Right lobe of liver (tissue), 6 donors: ENCODE measurements at regions of chr2 and their contacts with region 1.

Region 1: DNA sequence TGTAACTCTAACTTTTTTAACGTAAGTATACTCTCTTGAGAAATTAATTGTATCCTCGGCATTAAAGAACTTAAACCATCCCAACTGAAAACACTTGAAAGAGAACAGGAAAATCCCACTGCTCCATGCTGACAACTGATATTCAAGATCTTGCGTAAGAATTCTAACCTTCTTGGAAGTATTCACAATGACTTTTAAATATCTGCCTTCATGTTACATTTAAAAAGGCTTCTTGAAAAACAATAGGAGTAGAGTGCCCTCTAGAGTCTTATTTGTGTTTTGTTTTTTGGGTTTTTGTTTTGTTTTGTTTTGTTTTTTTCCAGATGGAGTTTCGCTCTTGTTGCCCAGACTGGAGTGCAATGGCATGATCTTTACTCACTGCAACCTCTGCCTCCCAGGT is 65.4 kb upstream of the DNAJC10 start:
- DNase-seq: no peak
- ATAC-seq: peak; percentile 30 to 53 (median 39)
- H3K4me3 ChIP-seq: no peak overlapping the region
- H3K27ac ChIP-seq: no peak overlapping the region
- H3K4me1 ChIP-seq: no peaks in the 10 kb centered on the region
- H3K27me3 ChIP-seq: no peaks in the 10 kb centered on the region
- CTCF ChIP-seq: peak; percentile 34 to 46 (median 44)
- POLR2A ChIP-seq: no peak

Region 2: GRCh38 chr2:182186132-182186735 is 464.5 kb before region 1 on chr2:
- intact Hi-C with region 1: loop called in 1 of 2 experiments (anchors 10 kb)
- DNase-seq: no peak
- ATAC-seq: peak; percentile 49 to 73 (median 65)
- H3K4me3 ChIP-seq: no peak overlapping the region
- H3K27ac ChIP-seq: no peak overlapping the region
- H3K4me1 ChIP-seq: no peaks in the 10 kb centered on the region
- H3K27me3 ChIP-seq: no peaks in the 10 kb centered on the region
- CTCF ChIP-seq: peak; percentile 75 to 84 (median 80)
- POLR2A ChIP-seq: no peak

Region 3: DNA sequence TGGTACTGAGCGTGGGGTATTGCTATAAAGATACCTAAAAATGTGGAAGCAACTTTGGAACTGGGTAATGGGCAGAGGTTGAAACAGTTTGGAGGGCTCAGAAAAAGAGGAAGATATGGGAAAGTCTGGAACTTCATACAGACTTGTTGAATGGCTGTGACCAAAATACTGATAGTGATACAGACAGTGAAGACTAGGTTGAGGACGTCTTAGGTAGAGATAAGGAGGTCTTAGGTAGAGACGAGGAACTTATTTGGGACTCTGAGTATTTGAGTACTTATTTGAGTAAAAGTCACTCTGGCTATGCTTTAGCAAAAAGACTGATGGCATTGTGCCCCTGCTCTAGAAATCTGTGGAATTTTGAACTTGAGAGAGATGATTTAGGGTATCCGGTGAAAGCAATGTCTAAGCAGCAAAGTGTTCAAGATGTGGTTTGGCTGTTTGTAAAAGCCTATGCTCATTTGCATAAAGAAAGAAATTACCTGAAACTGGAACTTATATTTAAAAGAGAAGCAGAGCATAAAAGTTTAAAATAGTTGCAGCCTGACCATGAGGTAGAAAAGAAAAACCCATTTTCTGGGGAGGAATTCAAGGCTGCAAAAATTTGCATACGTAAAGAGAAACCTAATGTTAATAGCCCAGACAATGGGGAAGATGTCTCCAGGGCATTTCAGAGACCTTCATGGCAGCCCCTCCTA is 443.5 kb before region 1 on chr2:
- intact Hi-C with region 1: no loop called
- DNase-seq: no peak
- ATAC-seq: no peak
- H3K4me3 ChIP-seq: no peak overlapping the region
- H3K27ac ChIP-seq: no peak overlapping the region
- H3K4me1 ChIP-seq: no peaks in the 10 kb centered on the region
- H3K27me3 ChIP-seq: no peaks in the 10 kb centered on the region
- CTCF ChIP-seq: no peak
- POLR2A ChIP-seq: no peak

Region 4: DNA sequence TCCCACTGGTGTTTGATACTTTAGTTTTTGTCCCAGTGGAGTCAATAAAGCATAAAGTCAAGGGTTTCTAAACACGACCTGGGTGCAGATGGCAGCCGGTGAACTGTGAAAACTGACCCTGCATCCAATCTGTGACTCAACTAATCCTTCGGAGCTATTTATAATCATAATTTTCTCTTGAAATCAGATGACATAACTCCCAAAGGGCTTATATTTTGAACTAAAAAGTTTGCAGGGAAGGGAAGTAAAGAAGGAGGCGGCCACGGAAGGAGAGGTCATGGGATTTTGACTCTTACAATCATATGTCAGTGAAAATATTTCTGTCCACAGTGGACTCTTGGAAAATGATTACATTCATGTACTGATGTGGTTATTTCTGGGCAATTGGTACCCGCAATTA is 402.3 kb before region 1 on chr2:
- intact Hi-C with region 1: no loop called
- DNase-seq: no peak
- ATAC-seq: no peak
- H3K4me3 ChIP-seq: no peak overlapping the region
- H3K27ac ChIP-seq: no peak overlapping the region
- H3K4me1 ChIP-seq: no peaks in the 10 kb centered on the region
- H3K27me3 ChIP-seq: no peaks in the 10 kb centered on the region
- CTCF ChIP-seq: no peak
- POLR2A ChIP-seq: no peak

Region 5: GRCh38 chr2:182372661-182373060 is 278.0 kb before region 1 on chr2:
- intact Hi-C with region 1: no loop called
- DNase-seq: no peak
- ATAC-seq: peak in 3 of 4 donors; percentile 32 to 44 (median 37)
- H3K4me3 ChIP-seq: no peak overlapping the region
- H3K27ac ChIP-seq: no peak overlapping the region
- H3K4me1 ChIP-seq: no peaks in the 10 kb centered on the region
- H3K27me3 ChIP-seq: no peaks in the 10 kb centered on the region
- CTCF ChIP-seq: no peak
- POLR2A ChIP-seq: no peak